ENCODE measurements at regions of chr11 and their contacts with region 1.

Region 1: GRCh38 chr11:118227865-118228785 is 3.3 kb upstream of the JAML start:
- DNase-seq: peak; percentile 85
- ATAC-seq: peak; percentile 35
- H3K4me3 Mint-ChIP-seq: peak overlapping the region; percentile 65
- H3K27ac Mint-ChIP-seq: peak overlapping the region; percentile 97
- H3K4me1 Mint-ChIP-seq: peaks cover 54% of the 10 kb centered on the region
- H3K27me3 Mint-ChIP-seq: no peaks in the 10 kb centered on the region

Region 2: GRCh38 chr11:118117790-118118601 is 110.1 kb before region 1 on chr11:
- CTCF ChIA-PET with region 1: no interaction called
- DNase-seq: peak; percentile 75
- ATAC-seq: peak; percentile 85
- H3K4me3 Mint-ChIP-seq: peak overlapping the region; percentile 46
- H3K27ac Mint-ChIP-seq: peak overlapping the region; percentile 74
- H3K4me1 Mint-ChIP-seq: peaks cover 50% of the 10 kb centered on the region
- H3K27me3 Mint-ChIP-seq: no peaks in the 10 kb centered on the region

Region 3: GRCh38 chr11:118206391-118207031 is 21.6 kb before region 1 on chr11:
- CTCF ChIA-PET with region 1: interaction called, 29 read pairs
- DNase-seq: no peak
- ATAC-seq: no peak
- H3K4me3 Mint-ChIP-seq: peak overlapping the region; percentile 13
- H3K27ac Mint-ChIP-seq: peak overlapping the region; percentile 85
- H3K4me1 Mint-ChIP-seq: peaks cover 56% of the 10 kb centered on the region
- H3K27me3 Mint-ChIP-seq: no peaks in the 10 kb centered on the region

Region 4: DNA sequence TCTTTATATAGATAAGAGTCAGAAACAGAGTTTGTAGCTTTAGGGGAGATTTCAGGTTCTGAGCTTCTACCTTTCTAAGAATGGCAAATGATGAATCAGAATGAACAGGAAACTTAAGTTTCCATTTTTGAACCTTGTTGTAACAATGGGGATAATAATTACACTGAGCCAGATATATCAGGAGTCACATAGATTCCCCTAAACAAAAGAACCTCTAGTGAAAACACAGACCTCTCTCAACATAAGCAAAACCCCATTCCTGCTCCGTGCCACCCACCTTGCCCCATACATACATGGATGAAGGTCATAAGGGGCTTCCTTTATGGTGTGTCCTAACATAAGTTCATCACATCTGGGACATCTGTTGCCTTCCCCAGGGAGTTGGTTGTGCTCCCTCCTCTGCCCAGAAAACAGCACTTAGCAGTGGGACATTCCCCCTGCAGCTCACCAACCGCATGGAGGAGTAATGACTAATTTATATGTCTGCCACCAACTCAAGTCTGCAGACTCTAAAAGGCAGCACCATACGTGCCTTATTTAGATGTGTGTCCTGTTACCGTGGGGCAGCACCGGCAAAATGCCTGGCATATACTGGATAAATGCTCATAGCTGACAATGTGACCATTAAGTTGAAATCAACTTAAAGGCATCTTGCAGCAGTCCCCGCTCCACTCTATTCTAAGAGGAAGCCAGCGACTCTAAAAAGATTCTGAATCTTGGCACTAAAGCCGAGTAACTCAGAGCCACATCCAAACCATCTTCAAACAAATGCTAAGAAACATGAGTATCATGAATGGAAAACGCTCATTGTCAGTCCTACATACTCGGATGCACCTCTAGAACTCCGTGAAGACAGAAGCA is 11.3 kb before region 1 on chr11:
- CTCF ChIA-PET with region 1: interaction called, 21 read pairs
- DNase-seq: peak; percentile 75
- ATAC-seq: peak; percentile 67
- H3K4me3 Mint-ChIP-seq: peak overlapping the region; percentile 79
- H3K27ac Mint-ChIP-seq: peak overlapping the region; percentile 98
- H3K4me1 Mint-ChIP-seq: peaks cover 97% of the 10 kb centered on the region
- H3K27me3 Mint-ChIP-seq: no peaks in the 10 kb centered on the region

Region 5: GRCh38 chr11:118240999-118241768 is 13.1 kb after region 1 on chr11:
- CTCF ChIA-PET with region 1: interaction called, 44 read pairs
- DNase-seq: peak; percentile 88
- ATAC-seq: peak; percentile 89
- H3K4me3 Mint-ChIP-seq: peak overlapping the region; percentile 71
- H3K27ac Mint-ChIP-seq: peak overlapping the region; percentile 97
- H3K4me1 Mint-ChIP-seq: peaks cover 91% of the 10 kb centered on the region
- H3K27me3 Mint-ChIP-seq: no peaks in the 10 kb centered on the region

Region 6: DNA sequence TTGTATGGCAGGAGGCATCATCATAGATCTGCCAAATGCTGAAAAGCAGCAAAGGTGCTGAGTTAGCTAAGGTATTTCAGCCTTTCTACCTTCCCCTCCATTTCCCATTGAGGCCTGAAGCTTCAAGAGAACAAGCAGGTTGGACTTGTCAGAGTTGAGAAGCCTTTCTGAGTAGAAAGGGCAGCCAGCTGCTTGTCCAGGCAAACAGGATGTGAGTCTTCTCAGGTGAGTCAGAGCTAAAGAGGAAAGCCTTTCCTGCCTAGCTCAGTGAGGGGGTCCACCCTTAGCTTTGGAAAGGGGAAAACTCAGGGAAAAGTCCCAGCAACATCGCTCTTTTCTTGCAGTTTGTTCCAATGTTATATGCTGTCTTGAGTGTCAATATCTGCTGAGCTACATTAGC is 49.2 kb after region 1 on chr11:
- CTCF ChIA-PET with region 1: no interaction called
- DNase-seq: peak; percentile 55
- ATAC-seq: peak; percentile 69
- H3K4me3 Mint-ChIP-seq: no peak overlapping the region
- H3K27ac Mint-ChIP-seq: no peak overlapping the region
- H3K4me1 Mint-ChIP-seq: peaks cover 36% of the 10 kb centered on the region
- H3K27me3 Mint-ChIP-seq: no peaks in the 10 kb centered on the region

Measured in activated CD8-positive, alpha-beta memory T cell treated with anti-CD3 and anti-CD28 coated beads, Interleukin-2, amount 10 ng/mL, durations not matched to agents 7 days and 5 days (primary cell).